Posterior cingulate gyrus (tissue), 11 donors: ENCODE measurements at regions of chr2 and their contacts with region 1.

Region 1: GRCh38 chr2:210000464-210001324 is 1.7 kb upstream of the RPE start:
- DNase-seq: peak in 2 of 10 donors; percentile 70 to 77

Region 2: DNA sequence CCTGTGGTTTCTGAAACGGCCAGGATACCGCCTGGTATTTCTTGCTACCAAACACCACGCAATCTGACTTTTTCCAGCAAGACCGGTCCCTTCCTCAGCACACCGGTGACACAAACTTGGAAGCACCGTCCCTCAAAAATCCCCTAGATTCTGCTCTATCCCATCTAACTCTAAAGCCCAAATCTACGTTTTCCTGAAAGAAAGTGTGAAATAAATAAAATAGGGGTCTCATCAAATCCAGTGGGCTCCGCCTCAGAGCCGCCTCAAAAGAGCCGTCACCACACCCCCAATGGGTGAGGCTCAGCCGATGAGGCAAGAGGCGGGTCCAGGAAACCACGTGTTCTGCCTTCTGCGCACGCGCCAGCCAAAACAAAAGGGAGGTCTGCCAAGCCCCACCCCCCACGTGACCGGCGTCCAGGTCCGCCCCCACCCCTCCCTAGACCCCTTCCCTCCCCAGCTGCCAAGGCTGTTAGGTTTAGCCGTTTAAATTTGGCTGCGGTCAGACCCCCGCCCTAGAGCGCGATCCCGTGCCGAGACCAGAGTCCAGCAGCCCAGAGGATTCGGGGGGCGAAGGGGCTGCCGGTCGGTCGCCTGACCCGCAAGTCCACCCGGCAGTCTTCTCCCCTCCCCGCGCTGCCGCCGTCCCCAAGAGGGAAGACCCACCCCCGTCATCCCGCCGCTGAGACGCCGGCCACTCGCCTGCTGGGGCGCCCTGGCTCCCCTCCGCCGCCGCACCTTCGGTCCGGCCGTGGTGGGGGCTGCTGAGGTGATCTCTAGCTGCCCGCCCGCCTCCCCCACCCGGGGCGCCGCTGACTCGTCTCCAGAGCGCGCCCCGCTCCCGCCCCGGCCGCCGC is 170.0 kb after region 1 on chr2:
- intact Hi-C with region 1: loop called (anchors 1 kb)
- DNase-seq: peak; percentile 93 to 99 (median 96)